Dorsolateral prefrontal cortex (tissue), 120 donors: ENCODE measurements at regions of chr16 and their contacts with region 1.

Region 1: DNA sequence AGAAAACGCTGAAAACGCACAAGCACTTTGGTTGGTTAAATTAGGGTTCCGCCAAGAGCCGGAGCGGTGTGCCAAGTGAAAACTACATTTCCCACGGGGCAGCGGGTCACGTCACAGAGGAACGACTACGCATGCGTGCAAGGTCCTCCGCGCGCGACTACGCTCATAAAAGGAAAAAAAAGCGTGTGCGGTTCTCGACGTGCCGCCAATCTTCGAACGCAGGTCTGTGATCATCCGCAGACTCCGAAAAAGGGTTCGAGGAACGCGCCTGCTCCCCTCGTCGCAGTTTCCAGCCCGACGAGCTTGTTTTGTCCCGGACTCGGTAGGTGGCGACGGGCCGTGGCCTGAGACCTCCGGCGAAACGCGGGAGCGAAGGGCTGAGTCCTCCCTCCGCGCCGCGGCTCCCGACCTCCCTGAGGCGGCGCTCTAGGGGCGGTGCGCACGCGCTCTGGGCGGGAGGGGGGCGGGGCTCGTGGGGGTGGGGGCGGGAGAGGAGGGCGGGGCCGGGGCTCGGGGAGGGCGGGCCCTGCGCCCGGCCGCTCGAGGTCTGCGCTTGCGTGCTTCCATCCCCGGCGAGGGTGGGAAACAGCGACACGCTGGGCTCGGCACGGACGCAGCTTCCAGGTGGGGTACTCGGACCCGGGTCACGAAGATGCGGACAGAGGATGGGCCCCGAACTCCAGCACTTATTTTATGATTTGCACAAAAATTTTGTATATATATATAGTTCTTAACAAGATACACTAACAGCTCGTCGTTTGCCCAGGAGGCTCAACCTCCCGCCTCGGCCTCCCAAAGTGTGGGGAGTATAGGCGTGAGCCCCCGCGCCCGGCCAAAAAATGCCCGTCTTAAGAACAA is at the start of gene SGF29:
- DNase-seq: peak; percentile 83 to 94 (median 90)
- H3K4me3 ChIP-seq: peak within 1 kb of the TSS; percentile 40 to 95 (median 78)
- H3K27ac ChIP-seq: peak within 1 kb of the TSS; percentile 70 to 100 (median 99)
- H3K27me3 ChIP-seq: no peaks in the 10 kb centered on the region
- CTCF ChIP-seq: peak; percentile 12 to 81 (median 58)
- total RNA-seq, gene SGF29: 10.9 to 27.0 (median 16.8) TPM

Region 2: GRCh38 chr16:28211712-28212534 is 342.1 kb before region 1 on chr16 and contains the start of gene XPO6:
- intact Hi-C with region 1: loop called (anchors 5 kb)
- DNase-seq: peak; percentile 92 to 97 (median 96)
- H3K4me3 ChIP-seq: peak within 1 kb of the TSS; percentile 44 to 95 (median 83)
- H3K27ac ChIP-seq: peak within 1 kb of the TSS; percentile 50 to 95 (median 87)
- H3K27me3 ChIP-seq: no peaks in the 10 kb centered on the region
- CTCF ChIP-seq: peak in 21 of 56 donors; percentile 8 to 51 (median 25)
- total RNA-seq, gene XPO6: 111 to 213 (median 156) TPM

Region 3: DNA sequence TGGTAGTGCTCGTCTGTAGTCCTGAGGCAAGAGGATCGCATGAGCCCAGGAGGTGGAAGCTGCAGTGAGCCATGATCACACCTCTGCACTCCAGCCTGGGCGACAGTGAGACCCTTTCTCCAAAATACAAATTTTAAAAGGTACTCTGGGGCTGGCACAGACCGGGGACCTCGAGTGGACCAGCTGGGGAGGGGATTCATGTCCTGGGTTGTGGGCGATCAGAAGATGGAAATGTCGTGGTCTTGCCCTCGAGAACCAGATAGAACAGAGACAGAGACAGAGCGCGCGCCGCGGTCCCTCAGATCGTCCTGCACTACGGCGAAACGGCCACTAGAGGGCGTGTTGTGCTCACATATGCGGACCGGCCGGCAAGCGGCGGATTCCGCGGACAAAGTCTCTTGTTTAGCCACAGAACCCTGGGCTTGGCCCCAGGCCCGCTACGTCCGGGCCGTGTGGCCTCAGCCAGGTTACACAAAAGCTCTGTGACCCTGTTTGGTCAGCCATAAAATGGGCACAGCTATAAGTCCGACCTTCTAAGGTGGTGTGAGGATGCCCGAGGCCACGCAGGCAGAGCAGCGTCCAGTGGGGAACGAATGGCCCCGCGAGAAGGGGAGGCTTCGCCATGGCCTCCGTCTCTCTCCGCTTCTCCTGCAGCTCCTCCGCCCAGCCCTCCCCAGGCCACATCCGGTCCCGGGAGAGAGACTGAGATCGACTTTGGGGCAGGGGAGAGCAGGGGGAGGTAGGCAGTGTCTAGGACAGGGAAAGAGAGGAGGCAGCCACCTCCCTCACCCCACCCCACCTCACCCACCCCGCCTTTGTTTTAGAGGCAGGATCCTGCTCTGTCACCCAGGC is 276.2 kb before region 1 on chr16:
- intact Hi-C with region 1: loop called in 1 of 2 experiments (anchors 10 kb)
- DNase-seq: peak; percentile 81 to 92 (median 88)
- H3K4me3 ChIP-seq: peak overlapping the region; percentile 14 to 71 (median 55)
- H3K27ac ChIP-seq: peak overlapping the region in 5 of 59 donors; percentile 3 to 73 (median 48)
- H3K27me3 ChIP-seq: peaks cover 0 to 16% (median 0%) of the 10 kb centered on the region in 45 donors
- CTCF ChIP-seq: peak; percentile 71 to 100 (median 99)

Region 4: DNA sequence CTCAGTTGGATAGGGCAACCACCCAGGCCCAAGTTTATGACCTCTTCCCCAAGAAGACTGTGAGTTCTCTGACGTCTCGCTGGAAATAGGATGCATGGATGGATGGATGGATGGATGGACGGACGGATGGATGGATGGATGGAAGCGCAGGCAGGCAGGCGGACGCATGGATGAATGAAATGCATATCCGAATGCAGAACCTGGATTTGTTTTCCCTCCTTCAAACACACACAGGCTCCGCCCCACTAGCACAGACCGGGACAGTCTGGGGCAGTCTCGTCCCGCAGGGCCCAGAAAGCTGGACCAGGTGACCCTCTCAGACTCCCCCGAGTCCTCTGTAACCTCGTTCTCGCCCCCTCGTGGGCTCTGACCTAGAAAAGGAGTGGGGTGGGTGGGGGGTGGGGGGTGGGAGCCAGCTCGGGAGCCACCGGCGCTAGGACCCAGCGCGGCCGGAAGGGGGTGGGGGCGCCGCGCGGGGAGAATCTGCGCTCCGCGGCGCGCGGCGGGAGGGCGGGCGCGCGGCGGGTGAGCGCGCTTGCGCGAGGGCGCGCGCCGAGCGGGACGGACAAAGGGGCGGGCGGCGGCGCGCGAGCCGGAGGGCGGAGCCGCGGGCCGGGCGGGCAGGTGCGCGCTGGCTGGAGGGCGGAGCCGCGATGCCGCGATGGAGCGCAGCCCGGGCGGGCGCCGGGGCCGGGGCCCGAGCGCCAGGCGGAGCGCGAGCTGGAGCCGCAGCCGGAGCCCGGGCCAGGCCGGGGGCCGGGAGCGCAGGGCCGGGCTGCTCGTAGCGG is 261.9 kb before region 1 on chr16 and contains the start of gene SBK1:
- intact Hi-C with region 1: loop called (anchors 5 to 10 kb)
- DNase-seq: peak; percentile 46 to 85 (median 63)
- H3K4me3 ChIP-seq: peak within 1 kb of the TSS; percentile 54 to 85 (median 76)
- H3K27ac ChIP-seq: peak within 1 kb of the TSS in 51 of 59 donors; percentile 19 to 89 (median 70)
- H3K27me3 ChIP-seq: no peaks in the 10 kb centered on the region
- CTCF ChIP-seq: no peak
- total RNA-seq, gene SBK1: 7.4 to 32.7 (median 21.4) TPM

Region 5: DNA sequence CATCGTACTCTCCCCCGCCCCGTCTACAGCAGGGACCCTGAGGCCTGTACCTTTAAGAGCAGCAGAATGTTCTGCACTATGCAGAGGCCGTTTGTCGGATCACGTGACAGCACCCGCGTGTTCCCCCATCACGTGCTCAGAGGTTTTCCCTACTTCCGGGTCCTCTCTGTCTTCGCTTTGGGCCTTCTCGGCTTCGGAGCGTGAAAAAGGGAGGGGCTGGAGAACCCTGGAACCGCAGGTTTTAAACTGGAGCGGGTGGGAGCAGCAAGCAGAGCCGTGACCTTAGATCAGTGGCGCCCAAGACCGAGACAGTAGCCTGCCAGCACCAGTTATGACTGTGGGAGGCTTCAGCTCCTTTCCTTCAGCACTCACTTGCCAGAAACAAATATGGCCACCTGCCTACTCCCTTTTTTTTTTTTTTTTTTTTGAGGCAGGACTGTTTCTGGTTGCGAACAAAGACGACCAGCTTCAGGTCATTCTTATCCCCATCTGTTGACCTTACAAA is 62.0 kb before region 1 on chr16 and contains the start of gene CLN3:
- intact Hi-C with region 1: loop called (anchors 1 to 2 kb)
- DNase-seq: peak; percentile 92 to 97 (median 96)
- H3K4me3 ChIP-seq: peak within 1 kb of the TSS; percentile 66 to 100 (median 97)
- H3K27ac ChIP-seq: peak within 1 kb of the TSS; percentile 90 to 100 (median 98)
- H3K27me3 ChIP-seq: no peaks in the 10 kb centered on the region
- CTCF ChIP-seq: peak in 14 of 56 donors; percentile 10 to 41 (median 20)
- total RNA-seq, gene CLN3: 9.4 to 41.5 (median 22.9) TPM

Region 6: GRCh38 chr16:28524681-28525171 is 29.3 kb before region 1 on chr16:
- intact Hi-C with region 1: no loop called
- DNase-seq: no peak
- H3K4me3 ChIP-seq: no peak overlapping the region
- H3K27ac ChIP-seq: no peak overlapping the region
- H3K27me3 ChIP-seq: no peaks in the 10 kb centered on the region
- CTCF ChIP-seq: no peak

Region 7: GRCh38 chr16:28537076-28537475 is 16.9 kb before region 1 on chr16:
- intact Hi-C with region 1: loop called in 1 of 2 experiments (anchors 2 kb)
- DNase-seq: no peak
- H3K4me3 ChIP-seq: peak overlapping the region in 42 of 59 donors; percentile 3 to 59 (median 50)
- H3K27ac ChIP-seq: peak overlapping the region in 1 of 59 donors; percentile 89
- H3K27me3 ChIP-seq: no peaks in the 10 kb centered on the region
- CTCF ChIP-seq: no peak

Region 8: DNA sequence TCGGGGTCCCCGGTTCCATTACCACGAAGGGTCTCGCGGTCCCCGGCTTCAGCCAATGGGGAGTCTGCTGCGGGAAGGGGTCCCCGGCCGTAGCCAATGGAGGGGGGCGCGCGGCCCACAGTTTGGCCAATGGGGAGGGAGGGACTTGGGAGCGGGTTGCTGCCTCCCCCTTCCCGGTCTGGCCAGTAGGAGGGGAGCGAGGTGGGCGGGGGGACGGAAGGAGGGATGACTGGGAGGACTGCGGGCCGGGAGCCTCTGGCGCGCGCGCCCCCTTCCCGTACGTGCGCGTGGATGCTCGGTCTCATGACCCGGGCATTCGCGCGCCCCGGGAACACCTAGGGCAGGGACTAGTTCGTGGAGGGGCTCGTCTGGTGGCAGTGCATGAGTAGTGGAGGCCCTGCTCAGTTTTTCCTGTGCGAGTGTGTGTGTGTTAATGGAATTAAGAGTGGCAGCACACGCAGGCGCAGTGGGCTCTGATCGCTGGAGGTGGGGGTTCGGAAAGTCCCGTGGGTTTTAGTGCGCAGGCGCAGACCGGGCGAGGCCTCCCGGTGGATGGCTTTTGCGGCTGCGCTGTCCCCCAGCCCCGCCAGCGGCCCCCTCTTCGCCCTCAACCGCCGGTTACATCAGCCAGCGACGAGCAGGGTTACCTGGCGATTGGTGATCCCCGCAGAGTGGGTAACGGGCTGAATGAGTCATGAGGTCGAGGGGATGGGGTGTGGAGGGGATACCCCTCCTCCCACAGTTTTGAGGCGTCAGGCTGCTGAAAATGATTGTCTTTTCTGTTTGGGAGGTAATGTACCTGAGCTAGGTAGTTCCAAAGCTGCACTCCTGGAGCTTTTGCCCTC is 270.1 kb after region 1 on chr16:
- intact Hi-C with region 1: loop called in 1 of 2 experiments (anchors 10 kb)
- DNase-seq: peak; percentile 81 to 98 (median 94)
- H3K4me3 ChIP-seq: peak overlapping the region; percentile 79 to 100 (median 97)
- H3K27ac ChIP-seq: peak overlapping the region; percentile 80 to 100 (median 98)
- H3K27me3 ChIP-seq: no peaks in the 10 kb centered on the region
- CTCF ChIP-seq: peak in 43 of 56 donors; percentile 12 to 63 (median 41)